AG04449 (cell line): ENCODE measurements at regions of chr1 and their contacts with region 1.

Region 1: GRCh38 chr1:150813058-150813707 is 5.1 kb upstream of the CTSK start:
- DNase-seq: no peak
- H3K4me3 ChIP-seq: no peak overlapping the region
- CTCF ChIP-seq: peak; percentile 83

Region 2: DNA sequence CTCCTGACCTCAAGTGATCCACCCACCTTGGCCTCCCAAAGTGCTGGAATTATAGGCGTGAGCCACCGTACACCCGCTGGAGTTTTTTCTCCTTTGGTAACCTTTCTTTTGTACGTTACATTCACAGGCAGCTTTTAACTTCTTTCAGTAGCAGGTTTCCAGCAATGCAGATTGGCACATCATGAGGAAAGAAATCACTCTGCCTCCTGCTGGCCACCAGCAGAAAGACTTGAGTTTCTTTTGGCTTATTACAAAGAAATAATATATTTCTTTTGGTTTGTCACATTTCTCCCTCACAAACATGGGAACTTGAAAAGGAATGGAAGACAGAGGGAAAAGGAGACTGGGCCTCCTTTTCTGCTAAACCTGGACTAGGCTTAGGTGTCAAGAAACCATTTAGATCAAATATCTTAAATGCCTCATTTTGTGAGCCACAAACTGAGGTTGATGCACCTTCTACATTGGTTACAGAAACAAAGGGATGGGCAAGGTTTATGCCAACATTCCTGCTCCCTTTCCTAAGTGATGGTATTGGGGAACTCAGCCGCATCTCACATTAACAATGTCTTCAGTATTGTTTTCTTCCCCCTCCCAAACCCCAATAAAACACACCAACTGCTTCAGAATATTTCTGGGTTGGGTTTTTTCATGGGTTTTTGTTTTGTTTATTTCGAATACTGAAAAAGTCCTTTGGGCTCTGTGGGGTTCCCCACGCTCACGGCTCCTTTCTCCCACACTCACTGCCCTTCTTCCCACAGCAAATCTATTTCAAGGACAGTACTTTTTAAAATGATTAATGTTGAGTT is 191.5 kb before region 1 on chr1:
- CTCF ChIA-PET with region 1: interaction called, 33 read pairs
- POLR2A ChIA-PET with region 1: no interaction called
- DNase-seq: no peak
- H3K4me3 ChIP-seq: no peak overlapping the region
- CTCF ChIP-seq: peak; percentile 63

Region 3: GRCh38 chr1:150765296-150765976 is 47.7 kb before region 1 on chr1 and contains the start of gene CTSS:
- CTCF ChIA-PET with region 1: no interaction called
- POLR2A ChIA-PET with region 1: no interaction called
- DNase-seq: no peak
- H3K4me3 ChIP-seq: no peak within 1 kb of the TSS; the same call in 1 of the 2 replicates
- CTCF ChIP-seq: no peak

Region 4: DNA sequence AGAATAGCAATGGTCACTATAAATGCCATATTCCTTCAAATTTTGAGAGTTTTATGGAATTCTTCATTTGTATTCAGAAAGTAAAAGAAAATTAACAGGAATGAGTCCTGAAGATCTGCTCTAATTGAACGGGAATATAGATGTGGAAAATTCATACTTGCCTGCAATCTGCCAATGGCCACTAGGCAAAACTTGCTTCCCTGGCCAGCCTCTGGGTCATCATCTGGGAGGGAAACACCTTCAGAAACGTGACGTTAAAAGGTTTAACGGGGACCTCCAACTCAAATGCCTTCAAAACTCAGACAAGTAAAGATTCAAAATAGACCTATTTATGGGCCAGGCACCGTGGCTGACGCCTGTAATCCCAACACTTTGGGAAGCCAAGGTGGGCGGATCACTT is 16.6 kb after region 1 on chr1:
- CTCF ChIA-PET with region 1: interaction called, 46 read pairs
- POLR2A ChIA-PET with region 1: no interaction called
- DNase-seq: no peak
- H3K4me3 ChIP-seq: no peak overlapping the region
- CTCF ChIP-seq: no peak